ENCODE measurements at regions of chr6 and their contacts with region 1.

Region 1: DNA sequence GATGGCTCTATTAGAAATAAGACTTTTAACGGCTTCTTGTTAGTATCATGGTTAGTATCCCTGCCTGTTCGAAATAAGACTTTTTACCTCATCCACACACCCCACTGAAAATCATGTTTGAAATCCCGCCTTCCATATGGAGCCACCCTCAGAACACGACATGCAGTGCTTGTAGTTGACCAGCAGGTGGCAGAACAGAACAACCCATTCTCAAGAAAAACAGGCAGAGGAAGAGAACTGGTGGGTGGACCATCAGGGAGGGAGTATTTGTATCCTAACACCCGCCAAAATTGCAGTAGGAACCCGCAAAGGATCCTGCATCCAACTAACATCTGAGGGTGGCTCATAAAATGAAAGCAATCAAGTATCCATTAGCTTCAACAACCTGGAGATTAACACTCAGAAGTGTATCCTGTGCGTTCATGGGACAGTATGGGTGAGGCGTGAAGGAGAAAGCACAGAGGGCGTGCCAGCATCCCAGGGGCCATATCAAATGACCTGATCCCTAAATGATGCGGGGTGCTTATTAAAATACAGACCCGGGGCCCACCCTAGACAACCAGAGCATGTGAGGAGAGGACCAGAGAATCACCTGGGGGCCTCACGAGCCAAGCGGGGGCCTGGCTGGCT is 89.6 kb upstream of the NHSL1 start:
- DNase-seq: peak; percentile 64
- H3K4me3 Mint-ChIP-seq: no peak overlapping the region
- H3K27ac Mint-ChIP-seq: no peak overlapping the region
- H3K4me1 Mint-ChIP-seq: peaks cover 21% of the 10 kb centered on the region
- H3K27me3 Mint-ChIP-seq: no peaks in the 10 kb centered on the region

Region 2: GRCh38 chr6:138109042-138109997 is 479.6 kb before region 1 on chr6:
- CTCF ChIA-PET with region 1: no interaction called
- POLR2A ChIA-PET with region 1: no interaction called
- intact Hi-C with region 1: loop called (anchors 5 kb)
- DNase-seq: peak; percentile 89
- H3K4me3 Mint-ChIP-seq: no peak overlapping the region
- H3K27ac Mint-ChIP-seq: no peak overlapping the region
- H3K4me1 Mint-ChIP-seq: peaks cover 21% of the 10 kb centered on the region
- H3K27me3 Mint-ChIP-seq: peaks cover 12% of the 10 kb centered on the region

Region 3: GRCh38 chr6:138410972-138411667 is 177.8 kb before region 1 on chr6:
- CTCF ChIA-PET with region 1: no interaction called
- POLR2A ChIA-PET with region 1: no interaction called
- intact Hi-C with region 1: loop called (anchors 1 kb)
- DNase-seq: no peak
- H3K4me3 Mint-ChIP-seq: no peak overlapping the region
- H3K27ac Mint-ChIP-seq: peak overlapping the region; percentile 66
- H3K4me1 Mint-ChIP-seq: peaks cover 29% of the 10 kb centered on the region
- H3K27me3 Mint-ChIP-seq: no peaks in the 10 kb centered on the region

Region 4: DNA sequence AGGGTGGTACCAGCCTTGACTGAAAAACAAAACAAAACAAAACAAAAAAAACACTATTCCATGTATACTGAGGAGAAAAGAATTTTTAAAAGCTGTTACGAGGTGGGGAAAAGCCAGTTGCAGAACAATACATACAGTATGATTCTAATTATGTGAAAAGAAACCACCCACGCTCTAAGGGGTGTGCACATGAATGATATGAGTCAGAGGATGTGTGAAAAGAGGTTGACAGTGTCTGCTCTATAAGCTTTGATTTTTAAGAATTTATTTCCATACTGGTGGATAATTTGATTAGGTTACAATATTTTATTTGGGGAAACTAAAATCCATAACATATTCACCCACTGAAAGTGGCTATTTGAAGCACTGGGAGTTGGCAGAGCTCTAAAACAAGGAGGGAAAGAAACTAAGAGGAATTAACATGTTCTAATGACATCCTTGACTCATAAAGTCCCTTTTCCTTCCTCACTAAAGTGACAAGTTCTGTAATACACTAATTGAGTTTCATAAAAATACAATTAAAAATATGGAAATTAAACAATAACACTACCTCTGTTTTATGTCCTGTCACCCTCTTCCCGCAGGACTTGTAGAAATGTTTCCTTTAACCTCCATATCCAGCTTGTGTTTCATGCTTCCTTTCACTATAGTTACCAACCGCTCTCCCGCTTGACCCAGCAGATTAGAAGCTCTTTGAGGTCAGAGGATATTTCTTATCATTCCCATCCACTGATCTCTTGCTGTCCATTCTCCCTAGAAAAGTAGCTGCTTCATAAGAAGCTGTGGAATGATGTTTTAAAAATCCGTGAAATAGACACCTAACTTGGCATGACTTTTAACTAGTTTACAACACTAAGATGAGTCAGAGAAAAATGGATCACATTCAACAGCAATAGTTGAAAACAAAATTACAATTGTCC is 66.1 kb after region 1 on chr6:
- CTCF ChIA-PET with region 1: interaction called, 7 read pairs
- POLR2A ChIA-PET with region 1: no interaction called
- intact Hi-C with region 1: loop called (anchors 1 kb)
- DNase-seq: peak; percentile 64
- H3K4me3 Mint-ChIP-seq: no peak overlapping the region
- H3K27ac Mint-ChIP-seq: no peak overlapping the region
- H3K4me1 Mint-ChIP-seq: peaks cover 24% of the 10 kb centered on the region
- H3K27me3 Mint-ChIP-seq: peaks cover 11% of the 10 kb centered on the region

Region 5: DNA sequence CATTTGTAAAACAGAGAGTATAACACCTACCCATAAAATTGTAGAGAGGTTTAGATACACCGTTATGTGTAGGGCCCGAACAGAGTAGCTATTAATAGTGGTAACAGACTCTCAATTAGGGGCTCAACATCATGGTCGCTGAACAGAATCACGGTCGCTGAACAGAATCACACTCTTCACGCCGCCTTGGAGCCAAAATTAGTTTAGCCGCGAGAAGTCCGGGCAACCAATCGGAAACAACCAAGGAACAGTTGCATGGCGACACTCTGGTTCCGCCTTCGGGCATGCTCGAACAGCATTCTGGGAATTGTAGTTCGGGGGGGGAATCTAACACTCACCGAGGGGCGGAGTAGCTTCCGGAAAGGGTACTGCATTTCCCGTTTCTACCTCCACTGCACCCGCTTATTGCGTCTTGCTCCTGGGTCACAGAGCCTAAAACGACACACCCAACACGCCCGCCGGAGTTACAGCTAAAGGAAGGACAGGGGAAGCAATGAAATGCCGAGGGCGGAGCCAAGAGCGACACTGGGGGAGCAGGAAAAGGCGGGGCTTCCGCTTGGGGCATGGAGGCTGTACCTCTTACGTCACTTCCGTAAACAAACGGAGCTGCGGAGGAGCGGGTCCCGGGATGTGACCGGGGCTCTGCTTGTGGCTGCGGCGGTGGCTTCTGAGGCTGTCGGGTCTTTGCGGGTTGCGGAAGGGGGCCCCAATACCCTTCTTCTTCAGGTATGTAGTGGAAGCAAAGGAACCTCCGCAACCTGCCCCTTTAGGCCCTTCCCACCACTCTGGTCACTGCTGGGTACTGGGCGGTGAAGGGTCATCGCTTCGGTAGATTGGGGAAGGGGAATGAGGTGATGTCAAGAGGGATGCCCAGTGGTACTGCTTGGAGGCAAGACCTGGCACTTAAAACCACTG is 184.5 kb after region 1 on chr6 and contains the start of gene CCDC28A:
- CTCF ChIA-PET with region 1: interaction called, 227 read pairs
- POLR2A ChIA-PET with region 1: no interaction called
- intact Hi-C with region 1: loop called (anchors 1 kb)
- DNase-seq: peak; percentile 94
- H3K4me3 Mint-ChIP-seq: peak within 1 kb of the TSS; percentile 97
- H3K27ac Mint-ChIP-seq: peak within 1 kb of the TSS; percentile 99
- H3K4me1 Mint-ChIP-seq: peaks cover 22% of the 10 kb centered on the region
- H3K27me3 Mint-ChIP-seq: no peaks in the 10 kb centered on the region
- total RNA-seq, gene CCDC28A: 17.9 to 18.8 TPM

Region 6: DNA sequence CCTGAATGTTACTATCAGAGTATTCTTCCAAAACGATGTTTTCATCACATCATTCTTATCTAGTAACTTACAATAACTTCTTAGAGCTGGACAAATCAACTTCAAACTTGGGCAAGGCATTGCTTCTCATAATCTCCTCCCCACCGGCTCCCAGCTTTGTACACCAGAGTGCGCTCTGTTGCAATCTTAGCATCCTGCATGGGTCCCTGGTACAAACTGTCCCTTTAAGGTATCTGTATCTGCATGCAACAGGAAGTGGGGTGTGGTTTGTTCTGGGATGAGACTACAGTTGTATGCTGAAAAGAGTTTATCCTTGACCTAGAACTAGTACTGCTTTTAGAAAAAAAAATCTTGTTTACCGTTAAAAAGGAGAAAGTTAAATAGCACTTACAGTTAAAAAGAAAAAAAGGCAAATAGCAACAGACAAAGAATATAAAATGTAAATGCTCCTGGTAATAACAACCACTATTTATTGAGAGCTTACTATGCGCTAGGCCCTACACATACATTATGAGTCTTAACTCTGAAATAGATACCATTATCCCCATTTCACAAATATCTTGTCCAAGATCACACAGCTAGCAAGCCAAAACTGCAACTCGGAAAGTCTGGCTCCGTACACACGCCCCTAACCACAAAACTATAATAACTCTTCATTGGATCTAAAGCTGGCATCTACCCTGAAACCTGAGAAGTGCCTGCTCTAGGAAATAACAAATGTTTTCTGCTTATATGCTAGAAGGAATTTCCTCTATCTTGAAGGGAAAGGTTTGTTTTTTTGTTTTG is 536.2 kb after region 1 on chr6:
- CTCF ChIA-PET with region 1: no interaction called
- POLR2A ChIA-PET with region 1: no interaction called
- intact Hi-C with region 1: loop called (anchors 5 kb)
- DNase-seq: peak; percentile 89
- H3K4me3 Mint-ChIP-seq: peak overlapping the region; percentile 43
- H3K27ac Mint-ChIP-seq: peak overlapping the region; percentile 93
- H3K4me1 Mint-ChIP-seq: peaks cover 52% of the 10 kb centered on the region
- H3K27me3 Mint-ChIP-seq: no peaks in the 10 kb centered on the region

Measured in activated CD4-positive, alpha-beta memory T cell treated with anti-CD3 and anti-CD28 coated beads for 36 hours (primary cell).